PC-9 (cell line): ENCODE measurements at regions of chr10 and their contacts with region 1.

Region 1: GRCh38 chr10:92074126-92074887 is 150.7 kb downstream of the BTAF1 start:
- DNase-seq: no peak
- H3K4me3 ChIP-seq: no peak overlapping the region
- H3K27ac ChIP-seq: no peak overlapping the region
- H3K4me1 ChIP-seq: no peaks in the 10 kb centered on the region
- H3K27me3 ChIP-seq: no peaks in the 10 kb centered on the region
- CTCF ChIP-seq: peak; percentile 60

Region 2: DNA sequence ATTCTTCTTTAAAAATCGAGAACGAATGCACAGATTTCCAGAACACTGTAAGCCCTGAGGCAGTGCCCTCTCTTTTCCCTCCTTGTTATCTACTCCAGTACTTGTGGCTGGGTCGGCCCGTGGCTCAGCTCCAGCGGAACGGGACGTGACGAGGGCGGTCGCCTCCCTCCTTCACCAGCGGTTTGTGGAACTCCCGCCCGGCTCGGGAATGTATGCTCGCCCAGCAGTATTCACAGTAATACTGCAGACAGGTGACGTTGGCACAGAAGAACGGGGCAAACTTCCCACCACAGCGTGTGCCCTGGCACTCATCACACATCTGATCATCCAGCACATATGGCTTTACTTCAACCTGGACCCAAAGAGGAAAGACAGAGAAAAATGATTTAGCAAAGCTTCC is 22.2 kb before region 1 on chr10:
- CTCF ChIA-PET with region 1: no interaction called
- POLR2A ChIA-PET with region 1: interaction called, 13 read pairs
- intact Hi-C with region 1: no loop called
- DNase-seq: no peak
- H3K4me3 ChIP-seq: no peak overlapping the region
- H3K27ac ChIP-seq: no peak overlapping the region
- H3K4me1 ChIP-seq: no peaks in the 10 kb centered on the region
- H3K27me3 ChIP-seq: no peaks in the 10 kb centered on the region
- CTCF ChIP-seq: no peak

Region 3: GRCh38 chr10:92267343-92267742 is 193.0 kb after region 1 on chr10:
- CTCF ChIA-PET with region 1: no interaction called
- POLR2A ChIA-PET with region 1: no interaction called
- intact Hi-C with region 1: no loop called
- DNase-seq: no peak
- H3K4me3 ChIP-seq: no peak overlapping the region
- H3K27ac ChIP-seq: no peak overlapping the region
- H3K4me1 ChIP-seq: peaks cover 12% of the 10 kb centered on the region
- H3K27me3 ChIP-seq: no peaks in the 10 kb centered on the region
- CTCF ChIP-seq: no peak

Region 4: GRCh38 chr10:92470041-92470440 is 395.7 kb after region 1 on chr10:
- CTCF ChIA-PET with region 1: interaction called, 10 read pairs
- POLR2A ChIA-PET with region 1: no interaction called
- intact Hi-C with region 1: no loop called
- DNase-seq: no peak
- H3K4me3 ChIP-seq: no peak overlapping the region
- H3K27ac ChIP-seq: no peak overlapping the region
- H3K4me1 ChIP-seq: no peaks in the 10 kb centered on the region
- H3K27me3 ChIP-seq: no peaks in the 10 kb centered on the region
- CTCF ChIP-seq: no peak

Region 5: DNA sequence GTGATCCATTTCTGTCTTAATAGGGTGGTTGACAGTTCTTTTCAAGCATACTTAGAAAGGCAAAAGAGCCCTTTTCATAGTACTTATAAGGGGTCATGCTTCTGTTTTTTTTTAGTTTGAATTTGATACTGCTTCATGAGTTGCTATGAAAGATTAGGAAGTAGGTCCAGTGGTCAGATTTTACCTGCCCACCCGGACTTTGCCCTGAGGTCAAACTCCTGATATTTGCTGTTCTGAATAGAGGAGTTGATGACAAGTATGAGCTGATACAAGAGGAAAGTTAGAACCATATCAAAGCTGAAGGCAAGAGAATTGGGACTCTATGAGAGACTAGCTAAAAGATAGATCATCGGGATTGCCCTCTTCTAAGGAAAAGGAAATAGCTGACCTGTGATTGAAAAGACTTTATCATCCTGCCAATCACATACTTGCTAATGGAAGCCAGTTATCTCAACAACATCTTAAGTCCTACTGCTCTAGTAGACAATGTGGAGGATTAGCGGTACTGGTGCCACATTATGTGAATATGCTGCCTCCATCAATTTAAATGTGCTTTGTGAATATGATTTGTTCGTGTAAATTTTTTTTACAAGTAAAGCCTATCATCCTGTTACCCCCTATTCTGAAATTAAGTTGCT is 948.8 kb after region 1 on chr10:
- CTCF ChIA-PET with region 1: no interaction called
- POLR2A ChIA-PET with region 1: no interaction called
- intact Hi-C with region 1: no loop called
- DNase-seq: no peak
- H3K4me3 ChIP-seq: no peak overlapping the region
- H3K27ac ChIP-seq: no peak overlapping the region
- H3K4me1 ChIP-seq: no peaks in the 10 kb centered on the region
- H3K27me3 ChIP-seq: no peaks in the 10 kb centered on the region
- CTCF ChIP-seq: no peak